Right ventricle myocardium superior (tissue), 1 donor: ENCODE measurements at regions of chr10 and their contacts with region 1.

Region 1: GRCh38 chr10:32149252-32149955 is 93.2 kb upstream of the KIF5B start:
- DNase-seq: peak; percentile 56
- ATAC-seq: peak; percentile 93

Region 2: GRCh38 chr10:32055813-32056600 is 93.4 kb before region 1 on chr10 and contains the start of gene KIF5B:
- intact Hi-C with region 1: loop called (anchors 10 kb)
- DNase-seq: peak; percentile 94
- ATAC-seq: peak; percentile 97
- total RNA-seq, gene KIF5B: 133 TPM

Region 3: DNA sequence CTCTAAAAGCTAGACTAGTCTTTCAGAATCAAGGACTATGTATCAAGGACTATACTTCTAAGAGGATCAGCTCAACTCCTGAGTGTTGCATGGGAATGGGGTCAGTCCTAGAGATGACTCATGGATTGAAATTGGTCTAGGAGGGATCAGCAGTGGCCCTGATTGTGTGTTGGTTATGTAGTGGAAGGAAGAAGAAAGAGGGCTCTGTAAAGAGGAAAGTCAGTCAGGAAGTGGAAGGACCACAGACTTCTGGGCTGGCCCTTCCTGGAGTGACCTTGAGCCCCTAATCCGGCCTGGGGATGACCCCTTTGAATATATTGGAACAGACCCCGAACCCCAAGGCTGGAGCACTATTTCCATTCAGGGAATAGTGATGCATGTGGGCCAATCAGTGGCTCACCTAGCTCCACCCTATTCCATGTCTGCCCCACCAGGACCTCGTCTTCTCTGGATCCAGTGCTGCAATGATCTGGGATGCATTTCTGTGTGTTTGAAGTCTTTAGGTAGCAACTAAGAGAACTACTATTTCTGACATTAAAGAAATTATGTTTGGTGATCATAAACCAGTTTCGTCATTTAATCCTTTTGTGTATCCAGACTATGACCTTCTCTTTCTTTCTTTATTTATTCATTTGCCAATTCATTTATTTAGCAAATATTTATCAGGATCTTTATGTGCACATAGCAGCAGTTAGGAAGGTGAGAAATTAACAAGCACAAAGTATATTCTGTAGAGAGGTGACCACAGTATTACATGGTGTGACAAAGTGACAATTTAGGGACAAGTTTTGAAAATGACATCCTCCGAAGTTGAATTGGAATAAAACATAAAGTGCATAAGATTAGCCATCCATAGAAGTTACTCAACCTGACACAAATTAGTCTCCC is 44.5 kb before region 1 on chr10:
- intact Hi-C with region 1: no loop called
- DNase-seq: no peak
- ATAC-seq: no peak

Region 4: DNA sequence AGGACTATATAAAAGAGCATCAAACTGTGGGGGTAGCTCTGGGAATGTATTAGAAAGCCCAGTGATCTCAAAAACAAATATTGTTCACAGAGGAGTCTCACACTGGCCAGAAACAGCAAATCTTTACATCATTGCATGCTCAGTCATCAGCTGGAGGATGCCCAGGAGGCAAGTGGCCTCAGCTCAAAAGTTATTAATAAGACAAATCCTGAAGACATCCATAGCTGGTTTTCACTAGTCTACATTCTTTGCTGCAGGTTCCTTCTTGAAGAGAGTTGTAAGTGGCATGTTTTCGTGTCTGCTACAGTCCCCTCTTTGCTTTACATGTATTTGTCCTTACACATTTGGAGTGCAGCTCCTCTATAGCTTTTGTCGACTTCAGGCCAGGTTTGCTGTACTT is 287.9 kb after region 1 on chr10:
- intact Hi-C with region 1: no loop called
- DNase-seq: no peak
- ATAC-seq: no peak